PC-9 (cell line): ENCODE measurements at regions of chr1 and their contacts with region 1.

Region 1: DNA sequence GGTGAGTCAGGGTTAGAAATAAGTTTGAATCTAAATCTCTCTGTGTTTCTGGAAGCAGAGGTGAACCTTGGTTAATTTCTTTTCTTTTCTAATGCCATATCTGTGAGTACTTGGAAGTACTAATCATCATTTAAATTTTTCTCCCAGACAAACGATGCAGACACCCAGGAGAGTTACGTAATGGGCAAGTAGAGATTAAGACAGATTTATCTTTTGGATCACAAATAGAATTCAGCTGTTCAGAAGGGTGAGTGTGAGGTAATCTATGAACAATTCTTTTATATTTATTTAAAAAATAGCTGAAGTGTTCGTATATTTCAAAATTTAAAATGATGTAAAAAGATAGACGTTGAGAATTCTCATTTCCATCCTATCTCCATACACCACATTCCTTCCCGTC is 11.2 kb downstream of the C4BPA start:
- DNase-seq: no peak
- H3K4me3 ChIP-seq: no peak overlapping the region
- H3K27ac ChIP-seq: no peak overlapping the region
- H3K4me1 ChIP-seq: no peaks in the 10 kb centered on the region
- H3K27me3 ChIP-seq: no peaks in the 10 kb centered on the region
- CTCF ChIP-seq: no peak

Region 2: DNA sequence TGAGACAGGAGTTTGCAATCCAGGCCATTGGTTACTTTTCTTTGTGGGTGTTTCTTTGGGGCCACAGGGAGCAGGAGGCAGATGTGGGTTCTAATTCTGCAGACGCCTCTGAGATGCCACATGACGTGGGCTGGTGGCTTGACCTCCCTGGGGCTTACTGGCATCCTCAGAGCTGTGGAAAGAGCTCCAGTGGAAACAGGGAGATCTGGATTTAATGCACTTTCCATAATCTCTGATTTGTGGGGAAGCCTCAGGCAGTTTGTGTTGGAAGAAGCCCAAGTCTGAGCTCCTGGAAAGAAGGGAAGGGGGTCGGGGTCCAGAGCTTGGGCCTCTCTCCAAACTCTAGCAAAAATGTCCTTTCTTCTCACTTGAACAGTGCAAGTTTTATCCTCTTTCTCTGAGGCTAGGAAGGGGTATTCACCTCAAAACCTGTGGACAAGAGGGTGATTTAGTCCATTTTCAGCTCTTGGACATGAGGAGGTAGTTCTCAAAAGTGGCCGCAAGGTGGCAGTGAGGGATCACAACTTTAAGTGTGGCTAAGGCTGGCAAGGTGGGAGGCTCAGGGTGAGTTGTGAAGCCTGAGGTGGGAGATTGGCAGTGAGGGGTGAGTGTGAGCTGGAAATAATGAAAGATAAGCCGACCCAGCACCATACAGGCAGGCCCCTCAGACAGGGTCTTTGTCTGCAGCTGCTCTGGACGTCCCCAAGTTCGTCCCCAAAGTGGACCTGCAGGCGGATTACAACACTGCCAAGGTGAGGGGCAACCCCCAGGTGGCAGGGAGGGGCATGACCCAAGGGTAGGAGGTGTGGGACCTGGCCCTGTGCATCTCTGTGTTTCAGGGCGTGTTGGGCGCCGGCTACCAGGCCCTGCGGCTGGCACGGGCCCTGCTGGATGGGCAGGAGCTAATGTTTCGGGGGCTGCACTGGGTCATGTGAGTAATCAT is 635.8 kb before region 1 on chr1:
- CTCF ChIA-PET with region 1: no interaction called
- POLR2A ChIA-PET with region 1: no interaction called
- intact Hi-C with region 1: no loop called
- DNase-seq: peak; percentile 51 to 63
- H3K4me3 ChIP-seq: no peak overlapping the region
- H3K27ac ChIP-seq: no peak overlapping the region
- H3K4me1 ChIP-seq: no peaks in the 10 kb centered on the region
- H3K27me3 ChIP-seq: no peaks in the 10 kb centered on the region
- CTCF ChIP-seq: peak; percentile 93

Region 3: DNA sequence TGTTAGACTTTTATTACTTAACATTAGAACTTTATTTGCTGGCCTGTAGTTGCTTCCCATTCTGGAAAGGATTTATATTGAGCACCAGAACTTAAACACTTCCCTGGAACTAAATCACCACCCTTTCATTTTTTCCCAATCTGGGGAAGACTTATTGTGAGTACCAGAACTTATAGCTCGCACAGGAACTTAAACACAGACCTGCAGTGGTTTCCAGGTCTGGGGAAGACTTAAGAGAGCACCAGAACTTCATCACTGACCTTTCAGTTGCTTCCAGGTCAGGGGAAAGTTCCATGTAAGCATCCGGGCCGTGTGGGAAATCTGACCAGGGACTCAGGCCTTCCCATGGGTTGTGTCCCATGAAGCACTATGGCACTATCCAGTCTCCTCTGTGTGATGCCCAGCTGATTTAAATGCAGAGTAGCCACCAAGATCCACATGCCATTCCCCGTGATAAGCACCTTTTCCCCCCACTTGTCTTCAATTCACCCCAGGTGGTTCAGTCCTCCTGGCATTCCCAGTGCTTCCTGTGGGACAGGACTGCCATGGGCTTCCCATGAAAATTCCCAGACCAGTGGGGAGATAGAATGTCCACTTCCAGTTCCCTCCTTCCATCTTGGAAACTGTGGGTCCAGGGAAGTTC is 37.6 kb after region 1 on chr1:
- CTCF ChIA-PET with region 1: no interaction called
- POLR2A ChIA-PET with region 1: interaction called, 18 read pairs
- intact Hi-C with region 1: no loop called
- DNase-seq: peak; percentile 53 to 75
- H3K4me3 ChIP-seq: peak overlapping the region; percentile 62
- H3K27ac ChIP-seq: peak overlapping the region; percentile 74
- H3K4me1 ChIP-seq: no peaks in the 10 kb centered on the region; the same call in 1 of the 2 replicates
- H3K27me3 ChIP-seq: no peaks in the 10 kb centered on the region
- CTCF ChIP-seq: no peak

Region 4: DNA sequence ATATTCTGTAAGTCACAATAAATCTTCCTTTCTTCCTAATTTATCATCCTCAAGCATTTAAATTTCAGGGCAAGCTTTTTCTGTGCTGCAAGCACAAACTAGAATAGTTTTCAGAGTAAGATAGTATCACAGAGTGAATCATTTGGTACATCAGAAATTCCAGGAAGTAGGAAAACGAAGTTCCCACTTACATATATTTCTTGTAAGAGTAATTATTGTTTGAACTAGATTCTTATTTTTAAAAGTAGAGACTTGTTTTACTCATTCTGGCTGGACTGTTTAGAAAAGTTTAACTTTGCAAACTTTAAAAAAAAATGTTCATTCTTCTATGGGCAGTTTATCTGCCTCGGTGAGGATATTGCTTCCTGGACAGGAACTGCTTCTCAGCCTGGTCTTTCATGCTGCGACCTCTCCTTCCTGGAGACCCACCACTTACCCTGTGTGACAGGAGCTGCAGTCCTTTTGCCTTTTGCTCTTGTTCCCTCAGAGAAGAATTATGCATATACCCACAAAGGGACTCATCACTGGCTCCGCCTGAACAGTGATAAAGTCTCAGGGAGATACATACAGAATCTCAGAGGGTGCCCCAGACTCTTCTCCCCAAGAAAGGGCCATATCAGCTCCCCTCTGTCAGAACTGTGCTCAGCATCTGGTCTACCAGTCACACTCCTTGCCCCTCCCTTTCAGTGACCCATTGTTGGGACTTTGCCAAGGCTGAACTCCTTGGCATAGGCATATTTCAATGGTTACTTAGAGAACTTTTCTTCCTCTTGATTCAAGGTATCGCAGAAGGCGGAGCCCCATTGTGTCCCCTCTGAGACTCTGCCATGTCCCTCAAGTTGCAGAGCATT is 103.5 kb after region 1 on chr1:
- CTCF ChIA-PET with region 1: no interaction called
- POLR2A ChIA-PET with region 1: no interaction called
- intact Hi-C with region 1: no loop called
- DNase-seq: peak in 1 of 2 experiments; percentile 37
- H3K4me3 ChIP-seq: no peak overlapping the region
- H3K27ac ChIP-seq: no peak overlapping the region
- H3K4me1 ChIP-seq: peaks cover 31% of the 10 kb centered on the region
- H3K27me3 ChIP-seq: no peaks in the 10 kb centered on the region
- CTCF ChIP-seq: no peak